ENCODE measurements at regions of chr20 and their contacts with region 1.

Region 1: GRCh38 chr20:13302647-13303450 is 81.8 kb downstream of the ISM1 start:
- DNase-seq: peak; percentile 61
- H3K4me3 Mint-ChIP-seq: no peak overlapping the region
- H3K27ac Mint-ChIP-seq: no peak overlapping the region
- H3K4me1 Mint-ChIP-seq: no peaks in the 10 kb centered on the region
- H3K27me3 Mint-ChIP-seq: no peaks in the 10 kb centered on the region
- CTCF ChIP-seq: peak; percentile 68

Region 2: GRCh38 chr20:13119583-13119982 is 183.3 kb before region 1 on chr20:
- CTCF ChIA-PET with region 1: interaction called, 170 read pairs
- POLR2A ChIA-PET with region 1: no interaction called
- intact Hi-C with region 1: loop called (anchors 1 kb)
- DNase-seq: peak; percentile 77
- H3K4me3 Mint-ChIP-seq: no peak overlapping the region
- H3K27ac Mint-ChIP-seq: no peak overlapping the region
- H3K4me1 Mint-ChIP-seq: peaks cover 6% of the 10 kb centered on the region
- H3K27me3 Mint-ChIP-seq: no peaks in the 10 kb centered on the region
- CTCF ChIP-seq: peak; percentile 69

Region 3: DNA sequence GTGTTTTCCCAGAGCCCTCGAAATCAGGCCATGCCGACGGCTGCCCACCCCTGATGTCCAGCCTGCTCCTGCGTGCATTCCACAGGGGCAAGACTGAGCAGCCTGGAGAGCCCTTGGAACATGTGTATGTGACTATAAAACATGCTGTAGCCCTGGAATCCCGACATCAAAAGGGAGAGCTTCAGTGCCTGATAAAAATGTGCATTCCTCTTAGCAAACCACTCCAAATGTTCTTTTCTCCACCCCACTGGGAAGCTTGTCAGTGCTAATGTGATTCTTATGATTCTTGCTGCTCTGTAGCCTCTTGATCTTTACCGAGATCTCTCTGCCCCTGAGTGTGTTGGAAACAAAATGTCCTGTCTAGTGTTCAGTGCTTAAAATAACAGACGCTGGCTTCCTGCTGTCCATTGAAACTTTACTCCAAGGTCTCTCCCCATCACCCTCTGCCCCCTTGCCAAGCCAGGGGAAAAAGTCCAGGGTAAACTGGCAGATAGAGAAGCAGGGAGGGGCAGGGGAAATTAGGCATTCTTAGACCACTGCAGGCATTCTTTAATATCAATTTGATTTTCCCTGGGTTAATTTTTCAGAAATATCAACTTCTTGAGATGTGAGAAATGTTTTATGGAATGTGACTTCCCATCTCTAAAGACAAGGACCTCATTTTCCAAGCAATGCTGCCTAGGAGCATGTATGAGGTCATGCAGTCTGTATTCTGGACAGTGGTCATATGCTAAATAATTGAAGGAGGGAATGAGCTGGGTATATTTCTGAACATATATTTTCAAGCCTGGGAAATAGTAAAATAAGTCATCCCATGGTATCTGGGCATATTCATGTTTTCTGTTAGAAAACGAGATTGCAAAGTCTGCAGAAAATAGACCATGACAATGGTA is 155.5 kb before region 1 on chr20:
- CTCF ChIA-PET with region 1: interaction called, 30 read pairs
- POLR2A ChIA-PET with region 1: no interaction called
- intact Hi-C with region 1: no loop called
- DNase-seq: no peak
- H3K4me3 Mint-ChIP-seq: no peak overlapping the region
- H3K27ac Mint-ChIP-seq: no peak overlapping the region
- H3K4me1 Mint-ChIP-seq: no peaks in the 10 kb centered on the region
- H3K27me3 Mint-ChIP-seq: no peaks in the 10 kb centered on the region
- CTCF ChIP-seq: no peak

Region 4: GRCh38 chr20:13212750-13213149 is 90.1 kb before region 1 on chr20:
- CTCF ChIA-PET with region 1: interaction called, 14 read pairs
- POLR2A ChIA-PET with region 1: no interaction called
- intact Hi-C with region 1: no loop called
- DNase-seq: peak; percentile 58
- H3K4me3 Mint-ChIP-seq: no peak overlapping the region
- H3K27ac Mint-ChIP-seq: peak overlapping the region; percentile 53
- H3K4me1 Mint-ChIP-seq: peaks cover 17% of the 10 kb centered on the region
- H3K27me3 Mint-ChIP-seq: no peaks in the 10 kb centered on the region
- CTCF ChIP-seq: no peak

Region 5: GRCh38 chr20:13277663-13278295 is 25.1 kb before region 1 on chr20:
- CTCF ChIA-PET with region 1: interaction called, 23 read pairs
- POLR2A ChIA-PET with region 1: no interaction called
- intact Hi-C with region 1: no loop called
- DNase-seq: peak; percentile 27
- H3K4me3 Mint-ChIP-seq: no peak overlapping the region
- H3K27ac Mint-ChIP-seq: no peak overlapping the region
- H3K4me1 Mint-ChIP-seq: peaks cover 5% of the 10 kb centered on the region
- H3K27me3 Mint-ChIP-seq: no peaks in the 10 kb centered on the region
- CTCF ChIP-seq: no peak

Region 6: GRCh38 chr20:13341781-13342277 is 39.0 kb after region 1 on chr20:
- CTCF ChIA-PET with region 1: interaction called, 18 read pairs
- POLR2A ChIA-PET with region 1: no interaction called
- intact Hi-C with region 1: no loop called
- DNase-seq: no peak
- H3K4me3 Mint-ChIP-seq: no peak overlapping the region
- H3K27ac Mint-ChIP-seq: no peak overlapping the region
- H3K4me1 Mint-ChIP-seq: no peaks in the 10 kb centered on the region
- H3K27me3 Mint-ChIP-seq: no peaks in the 10 kb centered on the region
- CTCF ChIP-seq: no peak

Region 7: DNA sequence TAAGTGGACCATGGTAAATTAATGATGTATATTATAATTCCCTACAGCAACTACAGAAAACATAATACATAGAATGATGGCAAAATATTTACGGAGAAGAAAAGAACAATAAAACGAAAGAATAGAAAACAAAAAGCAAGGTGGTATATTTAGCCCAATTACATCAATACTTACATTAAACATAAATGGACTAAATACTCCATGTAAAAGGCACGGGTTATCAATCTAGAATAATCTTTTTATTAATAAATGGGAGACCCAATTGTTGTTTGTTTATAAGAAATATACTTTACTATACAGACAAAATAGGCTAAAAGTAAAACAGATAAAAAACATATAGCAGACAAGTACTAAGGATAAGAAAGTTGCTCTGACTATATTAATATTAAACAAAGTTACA is 198.7 kb after region 1 on chr20:
- CTCF ChIA-PET with region 1: no interaction called
- POLR2A ChIA-PET with region 1: no interaction called
- intact Hi-C with region 1: no loop called
- DNase-seq: no peak
- H3K4me3 Mint-ChIP-seq: no peak overlapping the region
- H3K27ac Mint-ChIP-seq: no peak overlapping the region
- H3K4me1 Mint-ChIP-seq: no peaks in the 10 kb centered on the region
- H3K27me3 Mint-ChIP-seq: no peaks in the 10 kb centered on the region
- CTCF ChIP-seq: no peak

Region 8: GRCh38 chr20:13638496-13639222 is 335.8 kb after region 1 on chr20 and contains the start of gene TASP1:
- CTCF ChIA-PET with region 1: no interaction called
- POLR2A ChIA-PET with region 1: no interaction called
- intact Hi-C with region 1: no loop called
- DNase-seq: peak; percentile 98
- H3K4me3 Mint-ChIP-seq: peak within 1 kb of the TSS; percentile 81
- H3K27ac Mint-ChIP-seq: peak within 1 kb of the TSS; percentile 77
- H3K4me1 Mint-ChIP-seq: peaks cover 4% of the 10 kb centered on the region
- H3K27me3 Mint-ChIP-seq: no peaks in the 10 kb centered on the region
- CTCF ChIP-seq: no peak
- total RNA-seq, gene TASP1: 18.7 and 19.0 TPM in 2 replicates

Region 9: DNA sequence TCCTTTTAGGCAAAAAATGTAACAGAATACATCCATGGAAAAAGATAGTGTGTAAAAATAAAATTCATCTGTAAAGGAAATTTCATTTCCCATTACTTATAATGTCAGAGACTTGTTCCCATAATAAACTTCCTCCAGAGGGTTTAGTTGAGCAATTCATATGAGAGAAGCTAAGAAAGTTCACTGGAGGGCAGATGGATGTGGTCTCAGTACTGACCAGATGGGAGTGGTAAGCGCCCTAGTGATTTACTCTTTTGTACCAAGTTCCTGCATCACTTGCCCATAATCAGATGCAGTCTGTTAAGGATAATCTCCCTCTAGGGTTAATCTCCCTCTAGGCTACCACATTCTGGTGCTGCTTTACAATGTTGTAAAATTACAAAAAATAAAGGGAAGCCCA is 420.2 kb after region 1 on chr20:
- CTCF ChIA-PET with region 1: no interaction called
- POLR2A ChIA-PET with region 1: no interaction called
- intact Hi-C with region 1: no loop called
- DNase-seq: no peak
- H3K4me3 Mint-ChIP-seq: no peak overlapping the region
- H3K27ac Mint-ChIP-seq: no peak overlapping the region
- H3K4me1 Mint-ChIP-seq: no peaks in the 10 kb centered on the region
- H3K27me3 Mint-ChIP-seq: no peaks in the 10 kb centered on the region
- CTCF ChIP-seq: no peak